Panc1 (cell line): ENCODE measurements at regions of chr13 and their contacts with region 1.

Region 1: DNA sequence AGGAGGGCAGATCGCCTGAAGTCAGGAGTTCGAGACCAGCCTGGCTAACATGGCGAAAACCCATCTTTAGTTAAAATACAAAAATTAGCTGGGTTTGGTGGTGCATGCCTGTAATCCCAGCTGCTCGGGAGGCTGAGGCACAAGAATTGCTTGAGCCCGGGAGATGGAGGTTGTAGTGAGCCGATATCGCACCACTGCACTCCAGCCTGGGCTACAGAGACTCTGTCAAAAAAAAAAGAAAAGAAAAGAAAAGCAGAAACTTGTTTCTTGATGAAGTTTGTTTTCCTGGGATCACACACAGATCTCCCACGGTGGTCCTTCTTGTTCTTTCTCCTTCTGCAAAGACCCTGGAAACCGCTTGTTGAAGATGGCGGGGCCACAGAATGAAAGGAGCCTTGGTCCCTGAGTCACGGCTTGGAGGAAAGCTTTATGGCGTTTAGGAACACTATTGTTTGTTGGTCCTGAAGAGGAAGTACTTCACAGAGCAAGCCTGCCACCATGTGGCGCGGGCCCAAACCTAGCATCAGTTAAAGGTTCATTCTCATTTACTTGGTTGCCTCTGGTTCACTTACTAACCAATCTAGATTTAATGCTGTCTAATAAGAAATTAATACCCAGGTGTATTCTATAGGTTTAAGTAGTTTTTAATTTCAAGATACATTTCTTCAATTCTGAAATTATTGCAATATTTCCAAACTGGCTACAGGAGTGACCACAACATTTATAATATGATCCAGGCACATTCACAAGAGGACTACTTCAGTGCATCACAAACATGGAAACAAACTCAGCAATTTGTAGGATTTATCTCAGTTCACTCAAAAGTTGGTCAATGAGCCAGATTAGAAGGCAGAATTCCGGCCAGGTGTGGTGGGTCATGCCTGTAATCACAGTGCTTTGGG is 21.3 kb upstream of the ARL11 start:
- DNase-seq: peak; percentile 63
- ATAC-seq: peak; percentile 99
- H3K4me3 ChIP-seq: peak overlapping the region; percentile 26 to 51
- H3K27ac ChIP-seq: peak overlapping the region; percentile 52
- H3K4me1 ChIP-seq: peaks cover 3% of the 10 kb centered on the region; the same call in 1 of the 2 replicates
- H3K27me3 ChIP-seq: no peaks in the 10 kb centered on the region
- CTCF ChIP-seq: peak; percentile 81

Region 2: GRCh38 chr13:49300739-49301589 is 306.0 kb before region 1 on chr13:
- CTCF ChIA-PET with region 1: no interaction called
- POLR2A ChIA-PET with region 1: no interaction called
- in situ Hi-C with region 1: no loop called
- intact Hi-C with region 1: loop called (anchors 1 kb)
- DNase-seq: peak; percentile 36
- ATAC-seq: peak; percentile 94
- H3K4me3 ChIP-seq: peak overlapping the region; percentile 8 to 27; a peak in 3 of 4 replicates
- H3K27ac ChIP-seq: peak overlapping the region; percentile 17; the same call in 1 of the 2 replicates
- H3K4me1 ChIP-seq: no peaks in the 10 kb centered on the region
- H3K27me3 ChIP-seq: no peaks in the 10 kb centered on the region
- CTCF ChIP-seq: peak; percentile 85

Region 3: GRCh38 chr13:49443704-49444523 is 163.1 kb before region 1 on chr13 and contains the starts of genes CAB39L and SETDB2:
- CTCF ChIA-PET with region 1: no interaction called
- POLR2A ChIA-PET with region 1: no interaction called
- in situ Hi-C with region 1: no loop called
- intact Hi-C with region 1: loop called (anchors 10 kb)
- DNase-seq: peak; percentile 93
- ATAC-seq: peak; percentile 98
- H3K4me3 ChIP-seq: peak within 1 kb of the TSS; percentile 83 to 84
- H3K27ac ChIP-seq: peak within 1 kb of the TSS; percentile 94
- H3K4me1 ChIP-seq: peaks cover 13% of the 10 kb centered on the region; the same call in 1 of the 2 replicates
- H3K27me3 ChIP-seq: no peaks in the 10 kb centered on the region
- CTCF ChIP-seq: peak; percentile 41
- total RNA-seq, gene CAB39L: 6.6 TPM
- total RNA-seq, gene SETDB2: 6.1 TPM

Region 4: GRCh38 chr13:49488563-49488962 is 118.4 kb before region 1 on chr13:
- CTCF ChIA-PET with region 1: no interaction called
- POLR2A ChIA-PET with region 1: no interaction called
- in situ Hi-C with region 1: no loop called
- intact Hi-C with region 1: no loop called
- DNase-seq: no peak
- ATAC-seq: no peak
- H3K4me3 ChIP-seq: no peak overlapping the region
- H3K27ac ChIP-seq: no peak overlapping the region
- H3K4me1 ChIP-seq: no peaks in the 10 kb centered on the region
- H3K27me3 ChIP-seq: no peaks in the 10 kb centered on the region
- CTCF ChIP-seq: no peak

Region 5: GRCh38 chr13:49655906-49656305 is 48.9 kb after region 1 on chr13:
- CTCF ChIA-PET with region 1: no interaction called
- POLR2A ChIA-PET with region 1: no interaction called
- in situ Hi-C with region 1: no loop called
- intact Hi-C with region 1: no loop called
- DNase-seq: no peak
- ATAC-seq: no peak
- H3K4me3 ChIP-seq: no peak overlapping the region
- H3K27ac ChIP-seq: no peak overlapping the region
- H3K4me1 ChIP-seq: no peaks in the 10 kb centered on the region
- H3K27me3 ChIP-seq: no peaks in the 10 kb centered on the region
- CTCF ChIP-seq: no peak

Region 6: GRCh38 chr13:49760558-49760957 is 153.6 kb after region 1 on chr13:
- CTCF ChIA-PET with region 1: no interaction called
- POLR2A ChIA-PET with region 1: no interaction called
- in situ Hi-C with region 1: no loop called
- intact Hi-C with region 1: no loop called
- DNase-seq: no peak
- ATAC-seq: no peak
- H3K4me3 ChIP-seq: no peak overlapping the region
- H3K27ac ChIP-seq: no peak overlapping the region
- H3K4me1 ChIP-seq: no peaks in the 10 kb centered on the region
- H3K27me3 ChIP-seq: no peaks in the 10 kb centered on the region
- CTCF ChIP-seq: no peak